Upper lobe of right lung (tissue), 1 donor: ENCODE measurements at regions of chr11 and their contacts with region 1.

Region 1: GRCh38 chr11:63023841-63024648 is 8.4 kb upstream of the SLC22A8 start:
- DNase-seq: peak; percentile 91
- ATAC-seq: peak; percentile 97
- H3K4me3 ChIP-seq: no peak overlapping the region
- H3K27ac ChIP-seq: no peak overlapping the region
- H3K4me1 ChIP-seq: peaks cover 7% of the 10 kb centered on the region
- H3K27me3 ChIP-seq: peaks cover 5% of the 10 kb centered on the region
- CTCF ChIP-seq: peak; percentile 100

Region 2: DNA sequence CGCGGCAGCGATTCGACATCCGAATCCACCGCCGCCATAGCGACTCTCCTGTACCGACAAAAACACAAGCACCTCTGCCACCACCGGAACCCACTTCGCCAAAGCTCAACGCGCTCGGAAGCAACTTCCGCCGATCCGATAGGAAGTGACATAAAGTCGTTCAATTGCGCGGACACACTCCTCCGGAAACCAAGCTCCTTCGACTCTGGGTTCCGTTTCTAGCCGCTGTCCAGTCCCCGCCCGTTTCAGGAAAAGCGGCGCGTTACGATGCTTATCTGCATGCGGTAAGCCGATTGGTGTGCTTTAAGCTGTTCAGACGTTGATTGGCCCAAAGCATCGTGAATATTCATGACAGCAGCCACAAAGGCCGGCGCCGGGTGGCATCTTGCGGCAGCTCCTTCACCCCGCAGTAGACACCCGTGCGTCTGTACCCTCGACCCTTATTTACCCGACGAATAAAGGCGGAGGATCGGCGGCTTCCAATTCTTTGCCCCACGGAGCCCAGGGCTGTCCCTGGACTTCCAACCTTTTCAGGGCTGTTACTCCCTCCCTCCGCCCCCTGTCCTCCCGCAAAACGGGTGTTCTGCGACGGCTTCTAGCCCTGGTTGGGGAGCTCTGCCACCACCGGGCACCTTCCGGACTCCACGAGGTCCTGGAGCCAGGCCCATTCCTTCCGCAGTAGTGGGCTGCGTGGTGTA is 432.4 kb before region 1 on chr11 and contains the start of gene TUT1:
- intact Hi-C with region 1: no loop called
- DNase-seq: peak; percentile 96
- ATAC-seq: peak; percentile 96
- H3K4me3 ChIP-seq: peak within 1 kb of the TSS; percentile 71
- H3K27ac ChIP-seq: peak within 1 kb of the TSS; percentile 93
- H3K4me1 ChIP-seq: peaks cover 29% of the 10 kb centered on the region
- H3K27me3 ChIP-seq: no peaks in the 10 kb centered on the region
- CTCF ChIP-seq: no peak
- total RNA-seq, gene TUT1: 17.6 TPM

Region 3: DNA sequence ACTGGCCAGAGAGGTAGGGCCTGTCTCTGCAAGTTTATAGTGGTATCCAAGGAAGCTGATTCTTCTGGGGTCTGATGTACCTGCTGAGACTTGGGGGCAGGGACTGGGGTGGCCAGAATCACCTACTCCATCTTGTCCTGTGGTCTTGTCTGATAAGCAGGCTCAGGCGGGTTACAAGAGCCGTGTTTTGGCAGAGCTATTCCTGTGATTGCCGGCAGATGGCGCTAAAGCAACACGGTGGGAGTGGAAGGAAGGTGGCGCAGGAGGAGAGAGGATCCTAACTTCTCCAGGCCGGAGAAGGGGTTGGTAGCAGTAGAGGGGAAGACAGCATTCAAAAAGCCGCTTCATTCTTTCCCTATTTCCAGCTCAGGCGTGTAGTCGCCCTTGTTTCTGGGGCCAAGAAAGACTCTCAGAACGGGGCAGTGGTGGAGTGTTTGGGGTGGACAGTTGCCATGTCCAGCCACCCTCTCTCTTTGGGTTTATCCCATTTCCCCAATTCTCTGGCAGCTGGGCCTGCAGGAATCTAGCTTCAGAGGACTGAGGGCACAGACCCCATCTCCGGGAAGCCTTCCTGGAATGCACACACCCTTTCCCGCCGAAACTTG is 118.0 kb before region 1 on chr11:
- intact Hi-C with region 1: loop called (anchors 5 kb)
- DNase-seq: peak; percentile 84
- ATAC-seq: peak; percentile 86
- H3K4me3 ChIP-seq: no peak overlapping the region
- H3K27ac ChIP-seq: no peak overlapping the region
- H3K4me1 ChIP-seq: peaks cover 20% of the 10 kb centered on the region
- H3K27me3 ChIP-seq: no peaks in the 10 kb centered on the region
- CTCF ChIP-seq: peak; percentile 98